ENCODE measurements at regions of chr16 and their contacts with region 1.

Region 1: DNA sequence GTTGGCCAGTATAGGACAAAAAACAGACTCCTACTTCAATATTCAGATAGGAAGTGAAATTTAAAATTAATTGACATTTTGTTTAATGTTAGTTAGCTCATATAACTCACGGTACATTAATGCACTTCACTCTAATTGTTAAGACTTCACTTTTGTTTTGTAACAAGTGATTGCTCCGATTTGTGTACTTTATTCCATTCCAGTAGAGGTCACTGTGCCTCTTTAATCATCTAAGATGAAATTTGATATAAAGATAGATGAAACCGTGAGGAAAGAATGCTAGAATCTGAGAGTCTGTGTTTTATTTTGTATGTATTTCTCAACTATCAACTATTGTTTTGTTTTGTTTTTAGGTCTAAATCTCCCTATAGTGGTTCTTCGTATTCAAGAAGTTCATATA is 29.0 kb downstream of the RBBP6 start:
- DNase-seq: no peak
- ATAC-seq: no peak
- H3K4me3 ChIP-seq: no peak overlapping the region
- H3K27ac ChIP-seq: no peak overlapping the region
- H3K4me1 ChIP-seq: no peaks in the 10 kb centered on the region
- H3K27me3 ChIP-seq: no peaks in the 10 kb centered on the region

Region 2: DNA sequence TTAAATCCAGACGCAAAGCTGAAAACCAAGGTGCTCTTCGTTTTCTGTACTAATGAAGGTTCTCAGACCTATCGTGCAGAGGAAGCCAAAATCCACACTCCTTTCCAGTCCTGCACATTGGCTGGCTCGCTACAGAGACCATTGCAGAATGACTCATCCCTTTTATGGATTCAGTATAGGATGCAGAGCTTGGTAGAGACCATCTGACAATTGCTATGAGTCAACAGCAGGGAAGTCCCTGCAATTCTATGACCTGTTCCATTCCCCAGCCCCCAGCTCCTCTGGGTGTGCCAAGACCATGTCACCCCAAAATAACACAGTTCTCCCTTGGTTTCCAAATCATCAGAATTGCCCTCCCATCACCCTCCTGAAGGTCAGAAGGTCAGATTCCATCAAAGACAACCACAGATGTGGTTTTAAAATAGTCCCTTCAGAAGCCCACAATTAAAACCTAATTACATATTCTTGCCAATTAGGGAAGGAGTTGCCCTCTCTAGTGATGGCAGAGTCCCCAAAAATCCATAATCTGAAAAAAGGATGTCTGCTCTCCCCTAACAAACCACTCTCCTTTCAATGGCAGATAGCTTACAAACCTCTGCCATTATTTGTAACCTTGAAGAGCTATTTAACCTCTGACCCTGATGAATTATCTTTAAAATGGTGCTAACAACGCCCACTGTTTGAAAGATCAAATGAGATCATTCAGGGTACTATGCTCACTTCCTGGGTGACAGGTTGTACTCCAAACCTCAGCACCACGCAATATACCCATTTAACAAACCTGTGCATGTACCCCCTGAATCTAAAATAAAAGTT is 137.2 kb before region 1 on chr16:
- intact Hi-C with region 1: no loop called
- DNase-seq: no peak
- ATAC-seq: no peak
- H3K4me3 ChIP-seq: no peak overlapping the region
- H3K27ac ChIP-seq: no peak overlapping the region
- H3K4me1 ChIP-seq: no peaks in the 10 kb centered on the region
- H3K27me3 ChIP-seq: no peaks in the 10 kb centered on the region

Region 3: GRCh38 chr16:24544640-24545039 is 23.8 kb before region 1 on chr16:
- intact Hi-C with region 1: no loop called
- DNase-seq: no peak
- ATAC-seq: no peak
- H3K4me3 ChIP-seq: no peak overlapping the region
- H3K27ac ChIP-seq: no peak overlapping the region
- H3K4me1 ChIP-seq: no peaks in the 10 kb centered on the region
- H3K27me3 ChIP-seq: no peaks in the 10 kb centered on the region

Region 4: DNA sequence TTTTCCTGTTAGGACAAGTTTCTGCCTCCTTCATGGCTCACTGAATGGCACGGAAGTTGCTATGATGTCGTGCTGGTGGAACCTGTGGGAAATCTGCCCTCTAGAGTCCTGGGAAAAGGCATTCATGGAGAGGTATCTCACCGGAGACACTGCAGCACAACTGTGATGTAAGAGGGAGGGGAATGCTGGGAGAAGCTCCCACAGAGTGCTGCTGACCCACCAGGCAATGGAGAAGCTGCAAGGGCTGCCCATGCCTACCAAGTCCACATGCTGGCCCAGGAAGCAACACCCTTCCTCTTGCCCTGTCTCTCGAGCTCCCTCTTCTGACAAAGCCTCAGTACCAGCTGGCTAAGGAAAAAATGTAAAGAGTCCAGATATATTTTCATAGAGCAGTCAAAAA is 232.2 kb after region 1 on chr16:
- intact Hi-C with region 1: loop called (anchors 5 kb)
- DNase-seq: no peak
- ATAC-seq: no peak
- H3K4me3 ChIP-seq: no peak overlapping the region
- H3K27ac ChIP-seq: no peak overlapping the region
- H3K4me1 ChIP-seq: no peaks in the 10 kb centered on the region
- H3K27me3 ChIP-seq: no peaks in the 10 kb centered on the region

Region 5: DNA sequence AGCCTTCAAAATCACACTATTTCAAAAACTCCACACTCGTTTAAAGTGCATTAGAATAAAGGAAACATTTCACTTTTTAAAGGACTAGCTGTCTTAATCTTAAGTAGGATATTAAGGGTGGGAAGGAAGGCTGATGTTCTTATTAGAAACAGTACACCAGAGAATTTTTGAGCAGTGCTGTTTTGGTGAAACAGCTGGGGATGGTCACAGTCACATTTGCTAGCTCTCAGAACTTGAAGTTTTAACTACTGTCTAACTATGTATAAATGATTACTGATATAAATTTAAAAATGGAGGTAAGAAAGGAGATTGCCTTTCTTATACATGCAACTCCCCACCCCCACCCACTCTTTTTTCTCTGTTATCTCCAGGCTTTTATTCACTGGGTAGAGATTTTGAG is 238.9 kb after region 1 on chr16:
- intact Hi-C with region 1: loop called (anchors 5 kb)
- DNase-seq: no peak
- ATAC-seq: no peak
- H3K4me3 ChIP-seq: no peak overlapping the region
- H3K27ac ChIP-seq: no peak overlapping the region
- H3K4me1 ChIP-seq: no peaks in the 10 kb centered on the region
- H3K27me3 ChIP-seq: no peaks in the 10 kb centered on the region

Measured in aorta (tissue), 5 donors.